Activated T-helper 1 cell treated with anti-CD3 and anti-CD28 coated beads, Interleukin-12 subunit alpha, Interleukin-12 subunit beta, Interleukin-2, Interleukin-4 antibody, amounts not matched to agents 30 ng/mL and 10 ng/mL and 1 ng/mL, durations not matched to agents 14 hours and 24 hours and 36 hours (primary cell): ENCODE measurements at regions of chr17 and their contacts with region 1.

Region 1: GRCh38 chr17:30600049-30600829 is 123.0 kb downstream of the GOSR1 start:
- DNase-seq: peak; percentile 57
- H3K4me3 Mint-ChIP-seq: peak overlapping the region; percentile 81
- H3K27ac Mint-ChIP-seq: peak overlapping the region; percentile 55
- H3K4me1 Mint-ChIP-seq: peaks cover 19% of the 10 kb centered on the region
- H3K27me3 Mint-ChIP-seq: peaks cover 24% of the 10 kb centered on the region

Region 2: GRCh38 chr17:30084788-30085187 is 515.5 kb before region 1 on chr17:
- intact Hi-C with region 1: no loop called
- DNase-seq: no peak
- H3K4me3 Mint-ChIP-seq: no peak overlapping the region
- H3K27ac Mint-ChIP-seq: no peak overlapping the region
- H3K4me1 Mint-ChIP-seq: no peaks in the 10 kb centered on the region
- H3K27me3 Mint-ChIP-seq: peaks cover 31% of the 10 kb centered on the region

Region 3: GRCh38 chr17:30405161-30405560 is 195.1 kb before region 1 on chr17:
- intact Hi-C with region 1: no loop called
- DNase-seq: no peak
- H3K4me3 Mint-ChIP-seq: no peak overlapping the region
- H3K27ac Mint-ChIP-seq: no peak overlapping the region
- H3K4me1 Mint-ChIP-seq: peaks cover 10% of the 10 kb centered on the region
- H3K27me3 Mint-ChIP-seq: no peaks in the 10 kb centered on the region

Region 4: DNA sequence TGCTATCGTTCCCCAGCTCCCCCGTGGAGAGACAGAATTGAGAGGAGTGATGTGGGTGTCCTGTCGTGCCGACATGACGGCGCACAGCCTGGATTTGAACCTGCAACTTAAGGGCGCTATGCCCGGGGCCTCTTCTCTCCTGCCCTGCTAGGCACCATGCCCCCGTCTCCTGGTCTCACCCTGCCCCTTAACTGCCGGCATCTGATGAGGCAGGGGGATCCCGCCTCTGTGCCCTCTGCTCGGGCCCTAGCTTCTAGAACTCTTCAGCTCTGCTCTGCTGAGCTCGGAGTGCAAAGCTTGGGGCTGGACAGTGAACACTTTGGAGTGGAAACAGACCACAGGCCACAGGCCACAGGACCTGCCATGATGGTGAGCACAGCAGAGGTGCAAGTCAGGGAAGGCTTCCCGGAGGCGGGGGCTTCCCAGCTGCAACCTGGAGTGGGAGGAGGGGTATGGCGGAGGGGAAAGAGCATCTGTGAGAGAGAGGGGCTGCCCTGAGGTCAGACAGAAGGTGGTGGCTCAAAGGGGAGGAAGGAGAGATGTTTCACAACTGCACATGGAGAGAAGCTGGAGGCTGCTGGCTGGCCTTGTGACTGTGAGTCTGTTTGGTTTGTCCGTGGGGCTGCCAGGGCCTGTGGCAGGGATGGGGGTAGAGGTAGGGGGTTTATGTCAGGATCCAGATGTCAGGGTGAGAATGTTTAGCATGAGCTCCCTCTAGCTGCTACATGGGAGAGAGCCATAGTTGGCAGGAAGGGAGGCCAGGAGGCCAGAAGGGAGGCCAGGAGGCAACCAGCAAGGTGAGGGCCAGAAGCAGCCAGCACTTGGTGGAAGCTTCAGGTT is 116.4 kb after region 1 on chr17:
- intact Hi-C with region 1: loop called (anchors 5 kb)
- DNase-seq: no peak
- H3K4me3 Mint-ChIP-seq: no peak overlapping the region
- H3K27ac Mint-ChIP-seq: peak overlapping the region; percentile 40
- H3K4me1 Mint-ChIP-seq: peaks cover 13% of the 10 kb centered on the region
- H3K27me3 Mint-ChIP-seq: peaks cover 6% of the 10 kb centered on the region